ENCODE measurements at regions of chr2 and their contacts with region 1.

Region 1: DNA sequence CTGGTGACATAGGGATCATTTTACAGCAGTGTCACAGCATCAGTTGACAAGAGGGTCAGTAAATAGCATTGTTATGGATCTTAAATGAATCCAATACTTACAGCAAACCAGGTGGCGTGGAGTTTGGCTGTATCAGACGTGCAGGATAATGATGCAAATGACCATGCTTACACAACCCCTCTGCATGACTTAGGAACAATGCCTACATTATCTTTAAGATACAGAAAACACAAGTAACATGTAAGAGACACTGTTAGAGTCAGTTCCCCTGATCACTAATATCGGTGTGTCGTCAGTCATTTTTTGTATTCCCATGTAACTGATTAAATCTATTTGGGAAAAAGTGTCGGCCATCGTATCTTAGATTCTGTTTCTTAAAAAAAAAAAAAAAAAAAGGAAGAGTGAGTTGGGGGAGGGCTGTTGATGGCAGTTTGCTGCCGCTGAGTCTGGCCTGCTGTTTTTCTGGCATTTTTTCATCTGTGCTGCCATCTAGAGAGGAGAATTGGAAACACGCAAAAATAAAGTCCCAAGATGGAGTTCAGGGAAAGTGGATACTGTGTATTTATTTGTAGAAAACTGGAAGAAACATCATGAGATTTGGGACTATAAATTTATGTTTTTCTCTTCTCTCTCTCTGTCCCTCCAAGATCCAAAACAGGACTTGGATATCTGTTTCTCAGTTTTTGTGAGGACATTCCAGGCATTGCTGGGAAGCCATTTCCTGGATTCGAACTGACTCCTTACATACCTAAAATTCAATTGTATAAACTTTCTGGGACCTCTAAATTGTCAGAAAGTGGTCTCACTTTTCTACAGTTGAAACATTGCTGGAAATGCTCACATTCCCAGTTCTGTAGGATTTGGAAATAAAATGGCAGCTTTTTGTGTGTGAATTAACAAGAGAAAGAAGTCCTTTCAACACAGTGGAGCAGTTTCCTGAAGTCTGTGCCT is 60.3 kb upstream of the AGPS start:
- DNase-seq: peak; percentile 51
- ATAC-seq: peak; percentile 92
- H3K4me3 Mint-ChIP-seq: no peak overlapping the region
- H3K27ac Mint-ChIP-seq: no peak overlapping the region
- H3K4me1 Mint-ChIP-seq: peaks cover 7% of the 10 kb centered on the region
- H3K27me3 Mint-ChIP-seq: no peaks in the 10 kb centered on the region
- CTCF ChIP-seq: peak; percentile 79

Region 2: GRCh38 chr2:177344316-177344715 is 12.0 kb after region 1 on chr2:
- CTCF ChIA-PET with region 1: interaction called, 12 read pairs
- POLR2A ChIA-PET with region 1: no interaction called
- intact Hi-C with region 1: no loop called
- DNase-seq: no peak
- ATAC-seq: no peak
- H3K4me3 Mint-ChIP-seq: no peak overlapping the region
- H3K27ac Mint-ChIP-seq: no peak overlapping the region
- H3K4me1 Mint-ChIP-seq: no peaks in the 10 kb centered on the region
- H3K27me3 Mint-ChIP-seq: no peaks in the 10 kb centered on the region
- CTCF ChIP-seq: no peak

Region 3: GRCh38 chr2:177392373-177393202 is 60.3 kb after region 1 on chr2 and contains the start of gene AGPS:
- CTCF ChIA-PET with region 1: interaction called, 31 read pairs
- POLR2A ChIA-PET with region 1: no interaction called
- intact Hi-C with region 1: no loop called
- DNase-seq: peak; percentile 88
- ATAC-seq: peak; percentile 96
- H3K4me3 Mint-ChIP-seq: peak within 1 kb of the TSS; percentile 95
- H3K27ac Mint-ChIP-seq: peak within 1 kb of the TSS; percentile 89
- H3K4me1 Mint-ChIP-seq: peaks cover 51% of the 10 kb centered on the region
- H3K27me3 Mint-ChIP-seq: no peaks in the 10 kb centered on the region
- CTCF ChIP-seq: peak; percentile 43
- total RNA-seq, gene AGPS: 55.7 to 58.9 TPM

Region 4: DNA sequence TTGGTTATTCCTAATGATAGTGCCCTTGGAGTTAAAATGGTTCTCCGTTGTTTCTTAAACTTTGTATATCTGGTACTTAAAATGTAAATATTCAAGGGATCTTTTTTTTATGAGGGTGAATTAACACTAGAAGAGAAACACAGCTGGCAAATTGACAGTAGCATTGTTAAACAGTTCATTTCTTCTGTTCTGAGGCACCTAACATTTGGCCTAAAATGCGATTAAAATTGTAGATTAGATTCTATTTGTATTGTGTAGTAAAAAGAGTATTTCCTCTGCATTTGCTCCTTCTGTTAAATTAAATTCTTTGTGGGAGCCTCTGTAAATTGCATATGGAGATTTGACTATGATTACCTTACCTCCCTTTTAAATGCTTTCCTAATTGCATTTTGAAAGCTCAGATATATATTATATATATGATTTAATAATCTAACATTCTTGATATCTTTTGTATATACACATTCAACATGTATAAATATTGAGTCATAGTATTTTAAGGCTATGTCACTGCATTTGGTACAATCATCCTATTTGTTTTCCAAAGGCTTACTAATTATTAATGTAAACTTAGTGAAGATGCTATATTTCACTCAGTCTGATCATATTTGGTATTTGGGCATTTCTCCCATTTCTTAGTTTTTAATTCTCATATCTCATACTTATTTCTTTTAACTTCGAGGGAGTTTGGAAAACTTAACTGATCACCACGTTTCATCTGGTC is 184.7 kb after region 1 on chr2:
- CTCF ChIA-PET with region 1: no interaction called
- POLR2A ChIA-PET with region 1: no interaction called
- intact Hi-C with region 1: no loop called
- DNase-seq: no peak
- ATAC-seq: no peak
- H3K4me3 Mint-ChIP-seq: no peak overlapping the region
- H3K27ac Mint-ChIP-seq: no peak overlapping the region
- H3K4me1 Mint-ChIP-seq: peaks cover 3% of the 10 kb centered on the region
- H3K27me3 Mint-ChIP-seq: no peaks in the 10 kb centered on the region
- CTCF ChIP-seq: no peak

Region 5: GRCh38 chr2:177604271-177605065 is 272.2 kb after region 1 on chr2:
- CTCF ChIA-PET with region 1: interaction called, 19 read pairs
- POLR2A ChIA-PET with region 1: no interaction called
- intact Hi-C with region 1: no loop called
- DNase-seq: peak; percentile 3
- ATAC-seq: no peak
- H3K4me3 Mint-ChIP-seq: no peak overlapping the region
- H3K27ac Mint-ChIP-seq: no peak overlapping the region
- H3K4me1 Mint-ChIP-seq: no peaks in the 10 kb centered on the region
- H3K27me3 Mint-ChIP-seq: peaks cover 3% of the 10 kb centered on the region
- CTCF ChIP-seq: peak; percentile 55

Region 6: GRCh38 chr2:177763532-177764265 is 431.4 kb after region 1 on chr2:
- CTCF ChIA-PET with region 1: interaction called, 5 read pairs
- POLR2A ChIA-PET with region 1: no interaction called
- intact Hi-C with region 1: loop called (anchors 10 kb)
- DNase-seq: peak; percentile 89
- ATAC-seq: peak; percentile 99
- H3K4me3 Mint-ChIP-seq: no peak overlapping the region
- H3K27ac Mint-ChIP-seq: no peak overlapping the region
- H3K4me1 Mint-ChIP-seq: peaks cover 2% of the 10 kb centered on the region
- H3K27me3 Mint-ChIP-seq: peaks cover 10% of the 10 kb centered on the region
- CTCF ChIP-seq: peak; percentile 78

Measured in activated CD8-positive, alpha-beta T cell treated with anti-CD3 and anti-CD28 coated beads for 36 hours (primary cell).